Dendritic cell treated with granulocyte-macrophage colony-stimulating factor and Interleukin-4, amounts not matched to agents 40 ng/mL and 50 ng/mL, for 4 days (primary cell): ENCODE measurements at regions of chr5 and their contacts with region 1.

Region 1: DNA sequence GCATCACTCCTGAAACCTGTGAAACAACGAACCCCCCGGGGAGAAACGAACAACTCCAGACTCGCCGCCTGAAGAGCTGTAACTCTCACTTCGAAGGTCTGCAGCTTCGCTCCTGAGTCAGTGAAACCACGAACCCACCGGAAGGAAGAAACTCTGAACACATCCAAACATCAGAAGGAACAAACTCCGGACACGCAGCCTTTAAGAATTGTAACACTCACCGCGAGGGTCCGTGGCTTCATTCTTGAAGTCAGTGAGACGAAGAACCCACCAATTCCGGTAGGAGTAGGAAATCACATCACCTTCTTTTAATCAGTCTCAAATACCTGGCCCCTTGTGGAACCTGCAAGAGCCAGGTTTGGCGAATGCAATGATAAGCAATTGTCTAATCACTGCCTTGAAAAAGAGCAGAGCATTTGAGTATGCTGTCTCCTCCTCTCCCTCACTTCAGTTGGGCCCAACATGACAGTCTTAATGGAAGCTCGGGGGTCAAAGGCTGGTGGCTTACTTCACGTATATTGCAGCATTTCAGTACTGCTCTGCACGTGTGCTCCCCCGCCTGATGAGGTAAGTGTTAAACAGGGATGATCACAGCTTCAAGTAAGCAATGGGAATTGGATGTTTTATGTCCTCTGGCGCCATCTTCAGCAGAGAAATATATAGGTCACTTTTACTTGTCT is 473 bp downstream of the IRGM start:
- H3K4me3 Mint-ChIP-seq: peak overlapping the region; percentile 30
- H3K27ac Mint-ChIP-seq: no peak overlapping the region
- H3K4me1 Mint-ChIP-seq: peaks cover 10% of the 10 kb centered on the region
- H3K27me3 Mint-ChIP-seq: peaks cover 5% of the 10 kb centered on the region

Region 2: DNA sequence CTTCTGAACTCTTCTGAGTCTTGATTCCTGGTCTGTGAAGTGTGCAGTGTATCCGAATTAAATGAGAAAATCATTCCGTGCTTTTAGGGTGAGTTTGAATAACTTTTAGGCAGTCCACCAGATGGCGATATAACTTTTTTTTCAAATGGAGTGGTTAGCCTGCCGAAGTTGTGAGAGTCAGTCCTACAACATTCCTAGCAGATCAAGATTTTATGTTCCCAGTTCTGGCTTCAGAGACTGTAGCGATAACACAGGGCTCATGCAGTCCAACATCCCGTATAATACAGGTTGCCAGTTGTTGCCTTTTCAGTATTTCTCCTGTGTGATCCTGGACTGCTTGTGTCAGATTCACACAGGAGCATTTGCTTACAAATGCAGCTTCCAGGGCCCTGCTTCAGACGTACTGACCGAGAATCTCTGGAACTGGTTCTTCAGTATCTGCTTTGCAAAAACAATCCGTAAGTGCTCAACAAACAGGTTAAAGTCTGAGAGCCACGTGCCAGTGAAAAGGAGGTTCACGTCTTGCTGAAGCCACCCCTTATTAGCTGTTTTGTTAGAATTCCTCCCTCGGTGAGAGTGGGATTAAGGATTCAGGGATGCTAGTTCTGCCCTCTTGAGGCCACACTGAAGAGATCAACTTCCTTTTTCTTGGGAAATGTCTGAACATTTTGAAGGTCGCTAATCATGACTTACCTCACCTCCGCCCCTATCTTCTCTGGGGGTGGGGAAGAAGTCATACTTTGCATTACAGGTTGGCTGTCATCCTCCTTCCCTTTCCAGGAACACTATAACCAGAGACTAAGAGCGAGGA is 45.5 kb before region 1 on chr5:
- intact Hi-C with region 1: loop called (anchors 1 kb)
- H3K4me3 Mint-ChIP-seq: peak overlapping the region; percentile 60
- H3K27ac Mint-ChIP-seq: peak overlapping the region; percentile 53
- H3K4me1 Mint-ChIP-seq: peaks cover 13% of the 10 kb centered on the region
- H3K27me3 Mint-ChIP-seq: no peaks in the 10 kb centered on the region